ENCODE measurements at regions of chr5 and their contacts with region 1.

Region 1: GRCh38 chr5:109409844-109410388 is at the start of gene PJA2:
- DNase-seq: peak; percentile 96
- ATAC-seq: peak; percentile 86
- H3K4me3 Mint-ChIP-seq: peak within 1 kb of the TSS; percentile 99
- H3K27ac Mint-ChIP-seq: peak within 1 kb of the TSS; percentile 94
- H3K4me1 Mint-ChIP-seq: peaks cover 49% of the 10 kb centered on the region
- H3K27me3 Mint-ChIP-seq: no peaks in the 10 kb centered on the region
- CTCF ChIP-seq: no peak
- total RNA-seq, gene PJA2: 55.3 and 58.0 TPM in 2 replicates

Region 2: GRCh38 chr5:108727651-108728565 is 682.0 kb before region 1 on chr5:
- CTCF ChIA-PET with region 1: no interaction called
- POLR2A ChIA-PET with region 1: interaction called, 50 read pairs
- intact Hi-C with region 1: loop called (anchors 1 kb)
- DNase-seq: peak; percentile 62
- ATAC-seq: peak; percentile 84
- H3K4me3 Mint-ChIP-seq: peak overlapping the region; percentile 85
- H3K27ac Mint-ChIP-seq: peak overlapping the region; percentile 96
- H3K4me1 Mint-ChIP-seq: peaks cover 50% of the 10 kb centered on the region
- H3K27me3 Mint-ChIP-seq: no peaks in the 10 kb centered on the region
- CTCF ChIP-seq: no peak

Region 3: GRCh38 chr5:108911055-108911454 is 498.9 kb before region 1 on chr5:
- CTCF ChIA-PET with region 1: no interaction called
- POLR2A ChIA-PET with region 1: interaction called, 4 read pairs
- intact Hi-C with region 1: loop called (anchors 1 kb)
- DNase-seq: no peak
- ATAC-seq: peak; percentile 61
- H3K4me3 Mint-ChIP-seq: peak overlapping the region; percentile 17
- H3K27ac Mint-ChIP-seq: peak overlapping the region; percentile 86
- H3K4me1 Mint-ChIP-seq: peaks cover 14% of the 10 kb centered on the region
- H3K27me3 Mint-ChIP-seq: no peaks in the 10 kb centered on the region
- CTCF ChIP-seq: no peak

Region 4: DNA sequence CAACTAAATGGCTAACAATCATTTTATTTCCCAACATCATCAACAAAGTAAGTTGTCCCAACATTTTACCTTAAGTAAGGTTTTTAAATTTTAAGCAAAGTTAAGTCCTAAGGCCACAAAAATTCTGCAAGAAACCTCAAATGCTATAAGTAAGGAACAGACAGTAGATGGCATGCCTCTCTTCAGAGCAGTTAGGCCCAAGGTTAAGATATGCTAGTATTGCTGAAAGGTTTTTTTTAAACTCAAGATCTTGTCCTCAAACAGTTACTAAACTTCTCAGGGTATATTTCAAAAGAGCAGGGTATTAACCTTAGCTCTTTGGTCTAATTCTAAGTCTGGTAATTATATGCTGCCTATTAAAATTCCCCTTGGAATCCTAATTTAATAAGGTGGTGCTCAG is 35.3 kb before region 1 on chr5:
- CTCF ChIA-PET with region 1: no interaction called
- POLR2A ChIA-PET with region 1: interaction called, 6 read pairs
- intact Hi-C with region 1: loop called (anchors 5 kb)
- DNase-seq: no peak
- ATAC-seq: no peak
- H3K4me3 Mint-ChIP-seq: no peak overlapping the region
- H3K27ac Mint-ChIP-seq: no peak overlapping the region
- H3K4me1 Mint-ChIP-seq: peaks cover 14% of the 10 kb centered on the region
- H3K27me3 Mint-ChIP-seq: no peaks in the 10 kb centered on the region
- CTCF ChIP-seq: no peak

Region 5: GRCh38 chr5:109468737-109469420 is 59.0 kb after region 1 on chr5:
- CTCF ChIA-PET with region 1: no interaction called
- POLR2A ChIA-PET with region 1: no interaction called
- intact Hi-C with region 1: loop called (anchors 1 kb)
- DNase-seq: peak; percentile 55
- ATAC-seq: peak; percentile 93
- H3K4me3 Mint-ChIP-seq: no peak overlapping the region
- H3K27ac Mint-ChIP-seq: no peak overlapping the region
- H3K4me1 Mint-ChIP-seq: peaks cover 6% of the 10 kb centered on the region
- H3K27me3 Mint-ChIP-seq: no peaks in the 10 kb centered on the region
- CTCF ChIP-seq: no peak

Region 6: DNA sequence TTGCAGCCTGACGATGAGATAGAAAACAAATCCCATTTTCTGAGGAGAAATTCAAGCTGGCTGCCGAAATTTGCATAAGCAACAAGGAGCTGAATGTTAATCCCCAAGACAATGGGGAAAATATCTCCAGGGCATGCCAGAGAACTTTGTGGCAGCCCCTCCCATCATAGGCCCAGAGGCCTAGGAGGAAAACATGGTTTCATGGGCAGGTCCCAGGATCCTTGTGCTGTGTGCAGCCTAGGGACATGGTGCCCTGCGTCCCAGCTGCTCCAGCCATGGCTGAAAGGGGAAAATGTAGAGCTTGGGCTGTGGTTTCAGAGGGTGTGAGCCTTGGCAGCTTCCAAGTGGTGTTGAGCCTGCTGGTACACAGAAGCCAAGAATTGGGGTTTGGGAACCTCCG is 231.1 kb after region 1 on chr5:
- CTCF ChIA-PET with region 1: no interaction called
- POLR2A ChIA-PET with region 1: no interaction called
- intact Hi-C with region 1: no loop called
- DNase-seq: no peak
- ATAC-seq: no peak
- H3K4me3 Mint-ChIP-seq: no peak overlapping the region
- H3K27ac Mint-ChIP-seq: no peak overlapping the region
- H3K4me1 Mint-ChIP-seq: peaks cover 4% of the 10 kb centered on the region
- H3K27me3 Mint-ChIP-seq: no peaks in the 10 kb centered on the region
- CTCF ChIP-seq: no peak